HCT116 (cell line): ENCODE measurements at regions of chr11 and their contacts with region 1.

Region 1: GRCh38 chr11:55732936-55733335 is 40.3 kb upstream of the OR5D13 start:
- DNase-seq: no peak
- ATAC-seq: no peak
- H3K4me3 ChIP-seq: no peak overlapping the region
- H3K27ac ChIP-seq: no peak overlapping the region
- H3K4me1 ChIP-seq: no peaks in the 10 kb centered on the region
- H3K27me3 ChIP-seq: no peaks in the 10 kb centered on the region
- CTCF ChIP-seq: no peak
- POLR2A ChIP-seq: no peak
- RAD21 ChIP-seq: no peak

Region 2: GRCh38 chr11:55673860-55674259 is 59.1 kb before region 1 on chr11:
- CTCF ChIA-PET with region 1: no interaction called
- POLR2A ChIA-PET with region 1: no interaction called
- RAD21 ChIA-PET with region 1: no interaction called
- intact Hi-C with region 1: loop called (anchors 5 kb)
- DNase-seq: no peak
- ATAC-seq: no peak
- H3K4me3 ChIP-seq: no peak overlapping the region
- H3K27ac ChIP-seq: no peak overlapping the region
- H3K4me1 ChIP-seq: no peaks in the 10 kb centered on the region
- H3K27me3 ChIP-seq: no peaks in the 10 kb centered on the region
- CTCF ChIP-seq: no peak
- POLR2A ChIP-seq: no peak
- RAD21 ChIP-seq: no peak

Region 3: GRCh38 chr11:55793321-55793720 is 60.4 kb after region 1 on chr11:
- CTCF ChIA-PET with region 1: no interaction called
- POLR2A ChIA-PET with region 1: no interaction called
- RAD21 ChIA-PET with region 1: no interaction called
- intact Hi-C with region 1: no loop called
- DNase-seq: no peak
- ATAC-seq: no peak
- H3K4me3 ChIP-seq: no peak overlapping the region
- H3K27ac ChIP-seq: no peak overlapping the region
- H3K4me1 ChIP-seq: no peaks in the 10 kb centered on the region
- H3K27me3 ChIP-seq: no peaks in the 10 kb centered on the region
- CTCF ChIP-seq: no peak
- POLR2A ChIP-seq: no peak
- RAD21 ChIP-seq: no peak

Region 4: DNA sequence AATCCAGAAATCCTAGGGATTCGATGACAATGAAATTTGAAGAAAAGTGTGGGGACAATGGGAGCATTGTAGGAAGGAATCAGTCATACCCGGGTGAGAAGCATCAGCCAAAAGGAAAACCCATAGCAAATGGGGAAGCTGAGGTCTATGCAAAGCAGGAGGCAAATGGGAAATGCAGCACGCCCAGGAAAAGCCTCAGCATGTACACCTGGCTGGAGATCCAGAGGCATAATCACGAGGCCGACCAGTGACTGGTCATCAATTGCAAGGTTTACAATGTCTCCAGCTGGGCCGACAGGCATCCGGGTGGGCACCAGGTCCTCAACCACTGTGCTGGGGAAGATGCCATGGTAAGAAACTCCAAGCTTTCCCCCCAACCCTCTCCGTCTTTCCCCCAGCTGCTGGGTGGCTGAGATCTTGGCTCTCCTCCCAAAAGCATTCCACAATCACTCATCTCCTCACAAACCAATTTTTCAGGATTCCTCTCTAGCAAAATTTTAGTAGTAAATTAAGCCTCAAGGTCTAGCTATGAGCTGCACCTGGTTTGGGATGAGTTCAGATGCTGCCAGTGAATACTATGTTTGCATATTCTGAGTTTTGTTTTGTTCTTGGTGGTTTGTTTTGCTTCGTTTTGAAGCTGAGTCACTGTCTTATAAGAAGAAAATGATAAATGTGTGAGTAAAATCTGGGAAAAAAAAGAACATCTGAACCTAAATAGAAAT is 1157.8 kb after region 1 on chr11:
- CTCF ChIA-PET with region 1: no interaction called
- POLR2A ChIA-PET with region 1: no interaction called
- RAD21 ChIA-PET with region 1: no interaction called
- intact Hi-C with region 1: no loop called
- DNase-seq: no peak
- ATAC-seq: no peak
- H3K4me3 ChIP-seq: no peak overlapping the region
- H3K27ac ChIP-seq: no peak overlapping the region
- H3K4me1 ChIP-seq: no peaks in the 10 kb centered on the region
- H3K27me3 ChIP-seq: 0 out of 2 replicates have a peak, but pooled peaks cover 6% of the 10 kb centered on the region
- CTCF ChIP-seq: no peak
- POLR2A ChIP-seq: no peak
- RAD21 ChIP-seq: no peak